Astrocyte of the cerebellum (primary cell): ENCODE measurements at regions of chr4 and their contacts with region 1.

Region 1: DNA sequence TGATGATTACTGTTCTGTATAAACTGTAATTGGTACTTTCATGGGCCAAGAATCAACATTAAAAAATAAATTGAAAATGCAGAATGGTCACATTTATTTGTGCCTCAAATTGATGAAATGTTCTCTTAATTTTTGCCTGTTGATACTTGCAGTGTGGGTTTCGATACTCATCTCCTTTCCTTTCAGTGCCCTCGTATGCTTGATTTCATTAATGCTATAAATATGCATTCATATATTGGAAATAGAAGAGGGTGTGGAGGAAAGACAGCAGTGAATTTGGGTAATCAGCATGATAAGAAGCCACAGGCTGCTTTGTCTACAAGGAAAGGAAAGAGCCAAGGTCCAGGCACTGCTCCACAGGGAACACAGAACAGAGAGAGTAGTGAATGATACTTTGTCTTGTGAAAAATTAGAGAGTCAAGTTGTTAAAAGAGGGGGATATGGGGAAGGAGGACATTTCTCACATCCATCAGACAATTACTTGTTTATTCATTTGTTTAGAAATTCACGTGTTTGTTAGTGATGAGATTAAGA is 1.0 kb upstream of the DDX60 start:
- DNase-seq: no peak
- H3K4me3 ChIP-seq: no peak overlapping the region
- CTCF ChIP-seq: no peak

Region 2: GRCh38 chr4:168361365-168362024 is 41.9 kb after region 1 on chr4:
- in situ Hi-C with region 1: loop called (anchors 5 kb)
- DNase-seq: no peak
- H3K4me3 ChIP-seq: no peak overlapping the region
- CTCF ChIP-seq: no peak